GM12878 (cell line): ENCODE measurements at regions of chr9 and their contacts with region 1.

Region 1: GRCh38 chr9:33187519-33188218 is 20.5 kb upstream of the B4GALT1 start:
- DNase-seq: no peak
- ATAC-seq: no peak
- H3K4me3 ChIP-seq: no peak overlapping the region
- H3K27ac ChIP-seq: no peak overlapping the region
- H3K4me1 ChIP-seq: peaks cover 13% of the 10 kb centered on the region
- H3K27me3 ChIP-seq: no peaks in the 10 kb centered on the region
- CTCF ChIP-seq: no peak
- EP300 ChIP-seq: no peak
- POLR2A ChIP-seq: no peak
- RAD21 ChIP-seq: no peak

Region 2: GRCh38 chr9:33202552-33203201 is 15.0 kb after region 1 on chr9:
- CTCF ChIA-PET with region 1: interaction called, 6 read pairs
- POLR2A ChIA-PET with region 1: interaction called, 4 read pairs
- RAD21 ChIA-PET with region 1: interaction called, 4 read pairs
- SMC1A ChIA-PET with region 1: interaction called, 27 read pairs
- in situ Hi-C with region 1: no loop called
- intact Hi-C with region 1: no loop called
- DNase-seq: peak; percentile 72
- ATAC-seq: peak; percentile 99
- H3K4me3 ChIP-seq: no peak overlapping the region
- H3K27ac ChIP-seq: peak overlapping the region; percentile 31; the same call in 1 of the 2 replicates
- H3K4me1 ChIP-seq: peaks cover 19% of the 10 kb centered on the region
- H3K27me3 ChIP-seq: no peaks in the 10 kb centered on the region
- CTCF ChIP-seq: no peak
- EP300 ChIP-seq: peak in 1 of 2 experiments; percentile 83; a peak in 1 of 4 replicates
- POLR2A ChIP-seq: no peak
- RAD21 ChIP-seq: no peak